Activated CD4-positive, alpha-beta T cell treated with anti-CD3 and anti-CD28 coated beads, Interleukin-2, amount 10 ng/mL, durations not matched to agents 7 days and 5 days (primary cell): ENCODE measurements at regions of chr15 and their contacts with region 1.

Region 1: GRCh38 chr15:92797168-92797951 is 102.8 kb upstream of the CHD2 start:
- DNase-seq: peak; percentile 75
- H3K4me3 Mint-ChIP-seq: no peak overlapping the region
- H3K27ac Mint-ChIP-seq: peak overlapping the region; percentile 65
- H3K4me1 Mint-ChIP-seq: peaks cover 23% of the 10 kb centered on the region
- H3K27me3 Mint-ChIP-seq: no peaks in the 10 kb centered on the region

Region 2: GRCh38 chr15:92780843-92781242 is 16.5 kb before region 1 on chr15:
- CTCF ChIA-PET with region 1: interaction called, 14 read pairs
- POLR2A ChIA-PET with region 1: no interaction called
- DNase-seq: no peak
- H3K4me3 Mint-ChIP-seq: no peak overlapping the region
- H3K27ac Mint-ChIP-seq: no peak overlapping the region
- H3K4me1 Mint-ChIP-seq: no peaks in the 10 kb centered on the region
- H3K27me3 Mint-ChIP-seq: no peaks in the 10 kb centered on the region